ENCODE measurements at regions of chr11 and their contacts with region 1.

Region 1: GRCh38 chr11:44556735-44557409 is 8.6 kb upstream of the CD82 start:
- DNase-seq: peak in 8 of 9 donors; percentile 30 to 69 (median 60)
- ATAC-seq: peak; percentile 84
- H3K4me3 ChIP-seq: no peak overlapping the region
- H3K4me3 Mint-ChIP-seq: peak overlapping the region in 2 of 10 donors; percentile 20 to 25
- H3K27ac ChIP-seq: no peak overlapping the region
- H3K27ac Mint-ChIP-seq: peak overlapping the region in 4 of 9 donors; percentile 8 to 65 (median 57)
- H3K4me1 ChIP-seq: peaks cover 9 to 13% of the 10 kb centered on the region in 2 donors
- H3K4me1 Mint-ChIP-seq: peaks cover 11 to 39% (median 29%) of the 10 kb centered on the region in 7 donors
- H3K27me3 ChIP-seq: no peaks in the 10 kb centered on the region
- H3K27me3 Mint-ChIP-seq: peaks cover 0 to 3% (median 0%) of the 10 kb centered on the region in 5 donors

Region 2: DNA sequence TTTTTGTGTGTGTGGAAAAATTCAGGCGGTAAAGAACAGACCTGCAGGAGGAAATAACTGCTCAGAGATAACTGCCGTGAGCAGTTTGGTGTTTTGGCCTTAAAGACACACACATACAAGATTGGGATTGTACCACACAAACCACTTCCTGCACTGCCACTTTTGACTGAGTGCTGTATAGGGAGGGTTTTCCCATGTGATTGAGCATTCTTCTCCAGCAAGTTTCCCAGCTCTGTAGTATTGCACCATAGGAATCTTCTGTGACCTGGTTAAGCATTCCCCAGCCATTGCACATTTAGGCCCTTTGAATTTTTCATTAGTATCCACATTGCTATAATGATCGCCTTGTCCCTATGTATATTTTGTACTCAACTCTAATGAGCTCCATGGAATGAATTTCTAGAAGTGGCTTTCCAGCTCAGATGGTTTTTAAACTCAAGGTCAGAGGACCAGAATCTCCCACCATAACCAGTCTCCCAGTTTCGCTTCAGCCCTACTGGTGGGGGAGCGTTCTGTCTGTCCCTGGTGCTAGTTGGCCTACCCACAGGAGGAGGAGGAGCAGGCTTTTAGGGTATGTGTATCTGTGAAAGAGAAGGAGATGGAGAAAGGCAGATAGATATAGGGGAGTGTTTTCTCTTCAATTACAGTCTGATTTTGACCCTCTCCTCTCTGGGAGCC is 17.9 kb after region 1 on chr11:
- CTCF ChIA-PET with region 1: interaction called, 15 read pairs
- POLR2A ChIA-PET with region 1: interaction called, 4 read pairs
- intact Hi-C with region 1: no loop called
- DNase-seq: peak in 8 of 9 donors; percentile 19 to 59 (median 42)
- ATAC-seq: peak; percentile 64
- H3K4me3 ChIP-seq: no peak overlapping the region
- H3K4me3 Mint-ChIP-seq: peak overlapping the region; percentile 57 to 88 (median 72)
- H3K27ac ChIP-seq: peak overlapping the region; percentile 58
- H3K27ac Mint-ChIP-seq: peak overlapping the region; percentile 19 to 94 (median 87)
- H3K4me1 ChIP-seq: peaks cover 79 to 84% of the 10 kb centered on the region in 2 donors
- H3K4me1 Mint-ChIP-seq: peaks cover 62 to 96% (median 93%) of the 10 kb centered on the region in 7 donors
- H3K27me3 ChIP-seq: no peaks in the 10 kb centered on the region
- H3K27me3 Mint-ChIP-seq: no peaks in the 10 kb centered on the region

Region 3: GRCh38 chr11:44611687-44612434 is 55.0 kb after region 1 on chr11:
- CTCF ChIA-PET with region 1: interaction called, 379 read pairs
- POLR2A ChIA-PET with region 1: interaction called, 32 read pairs
- intact Hi-C with region 1: loop called (anchors 1 kb)
- DNase-seq: peak in 8 of 9 donors; percentile 35 to 57 (median 48)
- ATAC-seq: peak; percentile 82
- H3K4me3 ChIP-seq: no peak overlapping the region
- H3K4me3 Mint-ChIP-seq: peak overlapping the region in 9 of 10 donors; percentile 27 to 69 (median 60)
- H3K27ac ChIP-seq: peak overlapping the region; percentile 54
- H3K27ac Mint-ChIP-seq: peak overlapping the region; percentile 75 to 91 (median 89)
- H3K4me1 ChIP-seq: peaks cover 60 to 78% of the 10 kb centered on the region in 2 donors
- H3K4me1 Mint-ChIP-seq: peaks cover 40 to 96% (median 83%) of the 10 kb centered on the region in 7 donors
- H3K27me3 ChIP-seq: no peaks in the 10 kb centered on the region
- H3K27me3 Mint-ChIP-seq: no peaks in the 10 kb centered on the region

Region 4: GRCh38 chr11:44621140-44621681 is 64.3 kb after region 1 on chr11:
- CTCF ChIA-PET with region 1: interaction called, 379 read pairs
- POLR2A ChIA-PET with region 1: interaction called, 32 read pairs
- intact Hi-C with region 1: loop called (anchors 1 kb)
- DNase-seq: peak; percentile 33 to 64 (median 55)
- ATAC-seq: peak; percentile 76
- H3K4me3 ChIP-seq: no peak overlapping the region
- H3K4me3 Mint-ChIP-seq: no peak overlapping the region
- H3K27ac ChIP-seq: no peak overlapping the region
- H3K27ac Mint-ChIP-seq: peak overlapping the region in 1 of 9 donors; percentile 12
- H3K4me1 ChIP-seq: peaks cover 0 to 20% of the 10 kb centered on the region in 2 donors
- H3K4me1 Mint-ChIP-seq: peaks cover 20 to 44% (median 30%) of the 10 kb centered on the region in 7 donors
- H3K27me3 ChIP-seq: no peaks in the 10 kb centered on the region
- H3K27me3 Mint-ChIP-seq: no peaks in the 10 kb centered on the region

Region 5: DNA sequence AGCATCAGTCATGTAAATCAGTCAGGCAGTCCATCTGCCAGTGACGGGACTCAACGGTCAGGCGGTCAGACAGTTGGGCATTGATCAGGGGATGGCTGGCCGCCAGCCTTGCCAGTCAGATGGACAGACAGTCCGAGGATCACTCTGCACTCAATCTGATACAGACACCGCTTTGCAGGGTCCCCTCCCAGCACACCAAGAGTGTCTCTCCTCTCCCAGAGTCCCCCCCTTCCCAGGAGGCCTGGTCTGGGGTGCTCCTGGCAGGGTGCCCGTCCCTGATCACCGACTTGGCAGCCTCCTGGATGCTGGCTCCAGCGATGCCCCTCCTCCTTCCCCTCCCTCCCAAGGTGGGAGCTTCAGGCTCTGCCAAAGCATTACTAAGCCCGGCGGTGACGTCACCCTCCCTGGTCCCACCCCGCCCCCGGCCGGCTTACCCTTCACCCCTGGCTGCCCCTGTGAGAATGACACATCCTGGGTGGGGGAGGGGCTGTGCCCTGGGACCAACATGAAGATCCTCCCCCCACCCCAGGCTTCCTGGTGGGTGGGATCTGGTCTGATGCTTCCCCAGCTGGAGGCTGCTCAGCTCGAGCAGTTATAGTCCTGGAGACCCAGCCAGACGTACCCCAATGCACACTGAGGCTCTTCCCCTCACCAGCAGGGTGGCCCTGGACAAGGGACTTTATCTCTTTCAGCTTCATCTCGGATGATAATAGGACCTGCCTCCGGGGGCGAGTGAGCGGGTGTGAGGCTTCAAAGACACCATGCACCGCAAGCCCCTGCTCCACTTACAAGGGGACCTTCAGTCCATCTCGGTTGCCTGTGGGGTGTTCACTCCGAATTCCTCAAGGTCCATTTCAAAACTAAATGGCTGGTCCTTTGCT is 77.8 kb after region 1 on chr11:
- CTCF ChIA-PET with region 1: interaction called, 5 read pairs
- POLR2A ChIA-PET with region 1: no interaction called
- intact Hi-C with region 1: loop called (anchors 1 kb)
- DNase-seq: peak in 1 of 9 donors; percentile 17
- ATAC-seq: no peak
- H3K4me3 ChIP-seq: no peak overlapping the region
- H3K4me3 Mint-ChIP-seq: no peak overlapping the region
- H3K27ac ChIP-seq: no peak overlapping the region
- H3K27ac Mint-ChIP-seq: no peak overlapping the region
- H3K4me1 ChIP-seq: no peaks in the 10 kb centered on the region
- H3K4me1 Mint-ChIP-seq: peaks cover 2 to 23% (median 11%) of the 10 kb centered on the region in 7 donors
- H3K27me3 ChIP-seq: peaks cover 0 to 3% of the 10 kb centered on the region in 2 donors
- H3K27me3 Mint-ChIP-seq: peaks cover 0 to 27% (median 0%) of the 10 kb centered on the region in 5 donors

Region 6: GRCh38 chr11:44775366-44775984 is 218.6 kb after region 1 on chr11:
- CTCF ChIA-PET with region 1: interaction called, 5 read pairs
- POLR2A ChIA-PET with region 1: no interaction called
- intact Hi-C with region 1: loop called (anchors 1 kb)
- DNase-seq: peak; percentile 34 to 68 (median 49)
- ATAC-seq: peak; percentile 78
- H3K4me3 ChIP-seq: no peak overlapping the region
- H3K4me3 Mint-ChIP-seq: peak overlapping the region in 1 of 10 donors; percentile 35
- H3K27ac ChIP-seq: no peak overlapping the region
- H3K27ac Mint-ChIP-seq: peak overlapping the region in 4 of 9 donors; percentile 13 to 72 (median 34)
- H3K4me1 ChIP-seq: peaks cover 0 to 8% of the 10 kb centered on the region in 2 donors
- H3K4me1 Mint-ChIP-seq: peaks cover 5 to 46% (median 32%) of the 10 kb centered on the region in 7 donors
- H3K27me3 ChIP-seq: no peaks in the 10 kb centered on the region
- H3K27me3 Mint-ChIP-seq: no peaks in the 10 kb centered on the region

Region 7: DNA sequence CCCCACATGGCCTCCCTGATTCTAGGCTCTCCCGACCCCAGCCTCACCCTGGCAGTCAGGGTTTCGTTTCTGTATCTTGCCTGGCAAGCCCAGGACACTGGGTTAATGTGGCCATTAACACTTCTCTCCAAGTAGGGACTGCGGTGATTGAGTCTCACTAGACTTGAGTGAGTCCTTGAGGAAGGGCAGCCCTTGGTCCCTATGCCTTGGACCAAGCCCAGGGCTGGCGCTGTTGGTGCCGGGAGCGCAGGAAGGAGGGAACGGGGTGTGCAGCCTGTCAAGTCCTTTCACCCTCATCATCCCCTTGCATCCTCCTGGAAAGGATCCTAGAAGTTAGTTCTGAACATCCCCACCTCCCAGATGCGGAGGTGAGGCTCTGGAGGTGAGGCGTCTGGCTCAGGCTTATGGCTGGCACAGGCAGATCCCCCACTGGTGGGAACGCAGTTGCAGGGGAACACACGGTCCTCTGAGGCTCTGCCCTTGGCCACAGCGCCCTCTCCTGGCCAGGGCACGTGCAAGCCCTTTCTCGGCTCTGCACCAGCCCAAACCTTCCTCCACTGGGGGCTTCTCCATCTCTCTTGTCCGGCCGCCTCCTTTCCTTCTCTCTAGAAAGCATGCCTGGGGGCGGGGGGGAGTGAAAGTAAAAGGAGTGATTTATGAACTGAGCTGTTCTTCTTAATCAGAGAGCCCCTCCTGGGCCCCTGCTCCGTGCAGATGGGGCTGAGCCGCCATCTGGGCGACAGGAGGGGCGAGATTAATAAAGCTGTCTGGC is 337.2 kb after region 1 on chr11:
- CTCF ChIA-PET with region 1: no interaction called
- POLR2A ChIA-PET with region 1: no interaction called
- intact Hi-C with region 1: loop called (anchors 5 kb)
- DNase-seq: peak; percentile 16 to 65 (median 45)
- ATAC-seq: peak; percentile 84
- H3K4me3 ChIP-seq: no peak overlapping the region
- H3K4me3 Mint-ChIP-seq: no peak overlapping the region
- H3K27ac ChIP-seq: no peak overlapping the region
- H3K27ac Mint-ChIP-seq: peak overlapping the region in 1 of 9 donors; percentile 45
- H3K4me1 ChIP-seq: no peaks in the 10 kb centered on the region
- H3K4me1 Mint-ChIP-seq: peaks cover 0 to 12% (median 4%) of the 10 kb centered on the region in 7 donors
- H3K27me3 ChIP-seq: no peaks in the 10 kb centered on the region
- H3K27me3 Mint-ChIP-seq: no peaks in the 10 kb centered on the region